ENCODE measurements at regions of chr9 and their contacts with region 1.

Region 1: GRCh38 chr9:128863647-128864046 is 18.1 kb downstream of the KYAT1 start:
- DNase-seq: peak; percentile 49 to 96
- H3K4me3 ChIP-seq: no peak overlapping the region
- CTCF ChIP-seq: peak in 1 of 3 donors; percentile 92
- POLR2A ChIP-seq: no peak

Region 2: GRCh38 chr9:128927731-128928411 is 64.2 kb after region 1 on chr9:
- intact Hi-C with region 1: loop called (anchors 5 kb)
- DNase-seq: no peak
- H3K4me3 ChIP-seq: no peak overlapping the region
- CTCF ChIP-seq: peak in 1 of 3 donors; percentile 29
- POLR2A ChIP-seq: no peak